CD8-positive, alpha-beta T cell (primary cell): ENCODE measurements at regions of chr6 and their contacts with region 1.

Region 1: GRCh38 chr6:118709859-118710350 is 58.5 kb upstream of the CEP85L start:
- DNase-seq: peak; percentile 34 to 93 (median 70)
- ATAC-seq: peak; percentile 89
- H3K4me3 ChIP-seq: peak overlapping the region; percentile 85 to 86
- H3K4me3 Mint-ChIP-seq: peak overlapping the region; percentile 91
- H3K27ac ChIP-seq: peak overlapping the region; percentile 84 to 89
- H3K27ac Mint-ChIP-seq: peak overlapping the region; percentile 93
- H3K4me1 ChIP-seq: peaks cover 64% of the 10 kb centered on the region
- H3K4me1 Mint-ChIP-seq: peaks cover 68% of the 10 kb centered on the region
- H3K27me3 ChIP-seq: no peaks in the 10 kb centered on the region
- H3K27me3 Mint-ChIP-seq: no peaks in the 10 kb centered on the region
- CTCF ChIP-seq: no peak

Region 2: DNA sequence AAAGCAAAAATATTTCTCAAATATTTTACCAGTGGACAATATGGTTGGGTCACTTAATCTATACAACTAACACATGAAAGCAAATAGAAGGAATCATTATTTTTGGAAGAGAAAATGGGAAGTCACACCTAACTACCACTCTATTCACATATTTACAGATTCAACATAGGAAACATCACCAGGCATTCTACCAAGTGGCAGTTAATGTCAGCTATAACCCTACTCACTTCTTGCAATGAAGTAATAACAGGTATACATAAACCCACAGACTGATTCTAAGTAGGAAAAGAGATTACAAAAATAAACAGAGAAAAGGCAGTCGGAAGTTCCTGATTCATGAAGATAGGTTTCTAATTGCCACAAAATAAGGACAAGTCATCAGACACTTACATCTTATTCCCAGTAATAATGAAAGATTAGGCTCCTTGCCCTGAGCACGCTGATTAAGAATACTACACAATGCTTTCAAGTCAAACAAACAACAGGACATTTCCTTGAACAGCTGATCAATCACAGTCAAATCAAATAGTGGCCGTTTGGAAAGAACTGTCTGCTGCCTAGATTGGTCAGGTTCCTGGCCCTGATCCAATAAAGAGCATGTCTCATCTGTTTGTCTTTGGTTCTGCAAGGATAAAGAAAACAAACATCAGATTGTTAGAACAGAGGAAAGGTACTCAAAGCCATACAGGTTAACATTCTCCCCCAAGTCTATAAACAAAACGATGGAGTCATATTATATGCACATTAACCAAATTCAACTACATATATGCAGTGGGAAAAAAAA is 241.0 kb before region 1 on chr6:
- CTCF ChIA-PET with region 1: no interaction called
- POLR2A ChIA-PET with region 1: no interaction called
- intact Hi-C with region 1: no loop called
- DNase-seq: no peak
- ATAC-seq: no peak
- H3K4me3 ChIP-seq: no peak overlapping the region
- H3K4me3 Mint-ChIP-seq: no peak overlapping the region
- H3K27ac ChIP-seq: no peak overlapping the region
- H3K27ac Mint-ChIP-seq: no peak overlapping the region
- H3K4me1 ChIP-seq: no peaks in the 10 kb centered on the region
- H3K4me1 Mint-ChIP-seq: peaks cover 4% of the 10 kb centered on the region
- H3K27me3 ChIP-seq: no peaks in the 10 kb centered on the region
- H3K27me3 Mint-ChIP-seq: no peaks in the 10 kb centered on the region
- CTCF ChIP-seq: no peak

Region 3: GRCh38 chr6:118651282-118652050 is 58.4 kb before region 1 on chr6 and contains the start of gene CEP85L:
- CTCF ChIA-PET with region 1: interaction called, 5 read pairs
- POLR2A ChIA-PET with region 1: interaction called, 34 read pairs
- intact Hi-C with region 1: loop called (anchors 1 kb)
- DNase-seq: peak; percentile 80 to 95 (median 91)
- ATAC-seq: peak; percentile 91
- H3K4me3 ChIP-seq: peak within 1 kb of the TSS; percentile 72 to 86
- H3K4me3 Mint-ChIP-seq: peak within 1 kb of the TSS; percentile 95
- H3K27ac ChIP-seq: peak within 1 kb of the TSS; percentile 79 to 81
- H3K27ac Mint-ChIP-seq: peak within 1 kb of the TSS; percentile 95
- H3K4me1 ChIP-seq: peaks cover 43% of the 10 kb centered on the region
- H3K4me1 Mint-ChIP-seq: peaks cover 51% of the 10 kb centered on the region
- H3K27me3 ChIP-seq: no peaks in the 10 kb centered on the region
- H3K27me3 Mint-ChIP-seq: no peaks in the 10 kb centered on the region
- CTCF ChIP-seq: no peak
- total RNA-seq, gene CEP85L: 86.2 to 89.0 TPM

Region 4: GRCh38 chr6:118697554-118697953 is 12.4 kb before region 1 on chr6:
- CTCF ChIA-PET with region 1: interaction called, 12 read pairs
- POLR2A ChIA-PET with region 1: interaction called, 15 read pairs
- intact Hi-C with region 1: loop called in 1 of 2 experiments (anchors 2 kb)
- DNase-seq: peak in 2 of 9 experiments; percentile 31 to 51
- ATAC-seq: peak; percentile 51
- H3K4me3 ChIP-seq: no peak overlapping the region
- H3K4me3 Mint-ChIP-seq: no peak overlapping the region
- H3K27ac ChIP-seq: no peak overlapping the region
- H3K27ac Mint-ChIP-seq: peak overlapping the region; percentile 1
- H3K4me1 ChIP-seq: peaks cover 44% of the 10 kb centered on the region
- H3K4me1 Mint-ChIP-seq: peaks cover 85% of the 10 kb centered on the region
- H3K27me3 ChIP-seq: no peaks in the 10 kb centered on the region
- H3K27me3 Mint-ChIP-seq: no peaks in the 10 kb centered on the region
- CTCF ChIP-seq: no peak

Region 5: GRCh38 chr6:118768904-118769325 is 59.0 kb after region 1 on chr6:
- CTCF ChIA-PET with region 1: interaction called, 4 read pairs
- POLR2A ChIA-PET with region 1: interaction called, 22 read pairs
- intact Hi-C with region 1: no loop called
- DNase-seq: peak in 6 of 9 experiments; percentile 2 to 57 (median 15)
- ATAC-seq: peak; percentile 44
- H3K4me3 ChIP-seq: peak overlapping the region in 1 of 2 experiments; percentile 10
- H3K4me3 Mint-ChIP-seq: peak overlapping the region; percentile 35
- H3K27ac ChIP-seq: peak overlapping the region in 1 of 2 experiments; percentile 66
- H3K27ac Mint-ChIP-seq: peak overlapping the region; percentile 91
- H3K4me1 ChIP-seq: peaks cover 14% of the 10 kb centered on the region
- H3K4me1 Mint-ChIP-seq: peaks cover 26% of the 10 kb centered on the region
- H3K27me3 ChIP-seq: no peaks in the 10 kb centered on the region
- H3K27me3 Mint-ChIP-seq: no peaks in the 10 kb centered on the region
- CTCF ChIP-seq: no peak

Region 6: GRCh38 chr6:118800394-118801071 is 90.6 kb after region 1 on chr6:
- CTCF ChIA-PET with region 1: interaction called, 17 read pairs
- POLR2A ChIA-PET with region 1: interaction called, 19 read pairs
- intact Hi-C with region 1: no loop called
- DNase-seq: peak; percentile 61 to 90 (median 85)
- ATAC-seq: peak; percentile 85
- H3K4me3 ChIP-seq: peak overlapping the region in 1 of 2 experiments; percentile 28
- H3K4me3 Mint-ChIP-seq: peak overlapping the region; percentile 70
- H3K27ac ChIP-seq: peak overlapping the region in 1 of 2 experiments; percentile 38
- H3K27ac Mint-ChIP-seq: peak overlapping the region; percentile 94
- H3K4me1 ChIP-seq: peaks cover 23% of the 10 kb centered on the region
- H3K4me1 Mint-ChIP-seq: peaks cover 42% of the 10 kb centered on the region
- H3K27me3 ChIP-seq: no peaks in the 10 kb centered on the region
- H3K27me3 Mint-ChIP-seq: no peaks in the 10 kb centered on the region
- CTCF ChIP-seq: peak; percentile 91

Region 7: GRCh38 chr6:119308048-119308570 is 598.2 kb after region 1 on chr6:
- CTCF ChIA-PET with region 1: no interaction called
- POLR2A ChIA-PET with region 1: no interaction called
- intact Hi-C with region 1: no loop called
- DNase-seq: no peak
- ATAC-seq: no peak
- H3K4me3 ChIP-seq: no peak overlapping the region
- H3K4me3 Mint-ChIP-seq: no peak overlapping the region
- H3K27ac ChIP-seq: no peak overlapping the region
- H3K27ac Mint-ChIP-seq: no peak overlapping the region
- H3K4me1 ChIP-seq: peaks cover 8% of the 10 kb centered on the region
- H3K4me1 Mint-ChIP-seq: peaks cover 28% of the 10 kb centered on the region
- H3K27me3 ChIP-seq: no peaks in the 10 kb centered on the region
- H3K27me3 Mint-ChIP-seq: no peaks in the 10 kb centered on the region
- CTCF ChIP-seq: no peak